WTC11 (cell line): ENCODE measurements at regions of chr13 and their contacts with region 1.

Region 1: DNA sequence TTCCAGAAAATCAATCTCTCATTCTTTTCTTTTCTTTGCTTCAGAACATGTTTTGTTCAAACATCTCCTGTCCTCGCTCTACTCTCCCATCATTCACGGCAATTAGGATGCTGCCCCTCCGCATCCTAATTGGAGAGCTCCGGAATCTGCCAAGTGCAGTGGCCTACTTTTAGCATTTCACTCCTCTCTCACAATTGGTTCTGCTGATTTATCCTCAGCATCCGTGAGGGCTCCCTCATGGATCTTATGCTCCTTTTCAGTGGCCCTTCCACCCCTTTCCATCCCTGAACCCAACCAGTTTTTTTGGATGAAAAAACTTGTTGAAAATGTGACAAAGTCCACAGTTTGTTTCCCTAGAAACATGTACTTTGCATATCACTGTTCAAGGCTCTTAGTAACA is 22.4 kb downstream of the AMER2 start:
- DNase-seq: no peak
- ATAC-seq: no peak
- H3K4me3 Mint-ChIP-seq: no peak overlapping the region
- H3K27ac Mint-ChIP-seq: no peak overlapping the region
- H3K4me1 Mint-ChIP-seq: peaks cover 45% of the 10 kb centered on the region
- H3K27me3 Mint-ChIP-seq: peaks cover 14% of the 10 kb centered on the region
- CTCF ChIP-seq: no peak

Region 2: DNA sequence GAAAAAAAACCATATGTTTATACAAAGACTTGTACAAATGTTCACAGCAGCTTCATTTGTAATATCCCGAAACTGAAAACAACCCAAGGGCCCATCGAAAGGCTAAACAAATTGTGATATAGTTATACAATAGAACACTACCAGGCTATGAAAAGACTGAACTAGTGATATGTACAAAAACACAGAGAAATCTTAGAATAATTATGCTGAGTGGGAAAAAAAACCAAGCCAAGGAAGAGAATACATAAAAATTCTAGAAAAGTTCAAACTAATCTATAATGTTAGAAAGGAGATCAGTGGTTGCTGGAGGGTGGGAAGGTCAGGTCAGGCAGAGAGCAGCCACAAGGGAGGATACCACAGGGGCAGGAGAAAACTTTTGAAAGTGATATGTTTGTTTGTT is 46.0 kb before region 1 on chr13:
- CTCF ChIA-PET with region 1: no interaction called
- POLR2A ChIA-PET with region 1: no interaction called
- DNase-seq: no peak
- ATAC-seq: no peak
- H3K4me3 Mint-ChIP-seq: no peak overlapping the region
- H3K27ac Mint-ChIP-seq: no peak overlapping the region
- H3K4me1 Mint-ChIP-seq: no peaks in the 10 kb centered on the region
- H3K27me3 Mint-ChIP-seq: no peaks in the 10 kb centered on the region
- CTCF ChIP-seq: no peak

Region 3: GRCh38 chr13:25114220-25114619 is 35.5 kb before region 1 on chr13:
- CTCF ChIA-PET with region 1: interaction called, 10 read pairs
- POLR2A ChIA-PET with region 1: no interaction called
- DNase-seq: peak; percentile 88
- ATAC-seq: peak; percentile 87
- H3K4me3 Mint-ChIP-seq: no peak overlapping the region
- H3K27ac Mint-ChIP-seq: no peak overlapping the region
- H3K4me1 Mint-ChIP-seq: peaks cover 50% of the 10 kb centered on the region
- H3K27me3 Mint-ChIP-seq: peaks cover 14% of the 10 kb centered on the region
- CTCF ChIP-seq: peak; percentile 73

Region 4: DNA sequence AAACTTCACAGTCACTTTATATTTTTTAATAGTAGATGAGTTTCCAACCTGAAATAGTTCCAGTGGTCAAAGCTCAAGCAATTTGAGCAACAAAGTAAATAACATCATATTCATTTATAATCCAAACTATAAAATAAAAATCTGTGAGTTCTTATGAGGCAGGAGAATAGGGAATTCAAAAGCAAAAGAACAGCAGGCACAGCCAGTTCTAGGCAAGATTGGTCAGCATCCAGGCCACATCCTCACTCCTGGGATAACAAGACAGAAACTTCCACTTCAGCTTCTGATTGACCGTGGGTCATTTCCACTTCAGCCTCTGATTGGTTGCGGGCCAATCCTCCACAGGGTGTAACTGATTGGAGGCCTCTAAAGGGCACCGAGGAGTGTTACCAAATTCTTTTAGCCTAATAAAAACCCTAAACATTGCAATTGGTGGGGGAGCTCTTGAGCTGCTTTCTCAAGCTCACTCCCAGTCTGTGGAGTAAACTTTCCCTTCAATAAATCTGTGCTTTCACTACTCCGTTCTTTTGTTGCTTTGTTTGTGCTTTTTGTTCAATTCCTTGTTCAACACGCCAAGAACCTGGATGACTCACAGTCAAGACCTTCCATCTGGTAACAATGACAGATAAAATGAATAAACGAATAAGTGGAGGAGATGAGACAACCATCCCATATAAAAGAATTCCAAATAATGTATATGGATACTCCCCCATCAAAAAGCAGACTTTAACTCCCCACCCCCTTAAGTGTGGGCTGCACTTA is 65.0 kb after region 1 on chr13:
- CTCF ChIA-PET with region 1: no interaction called
- POLR2A ChIA-PET with region 1: no interaction called
- DNase-seq: no peak
- ATAC-seq: peak; percentile 79
- H3K4me3 Mint-ChIP-seq: no peak overlapping the region
- H3K27ac Mint-ChIP-seq: no peak overlapping the region
- H3K4me1 Mint-ChIP-seq: peaks cover 18% of the 10 kb centered on the region
- H3K27me3 Mint-ChIP-seq: no peaks in the 10 kb centered on the region
- CTCF ChIP-seq: no peak

Region 5: DNA sequence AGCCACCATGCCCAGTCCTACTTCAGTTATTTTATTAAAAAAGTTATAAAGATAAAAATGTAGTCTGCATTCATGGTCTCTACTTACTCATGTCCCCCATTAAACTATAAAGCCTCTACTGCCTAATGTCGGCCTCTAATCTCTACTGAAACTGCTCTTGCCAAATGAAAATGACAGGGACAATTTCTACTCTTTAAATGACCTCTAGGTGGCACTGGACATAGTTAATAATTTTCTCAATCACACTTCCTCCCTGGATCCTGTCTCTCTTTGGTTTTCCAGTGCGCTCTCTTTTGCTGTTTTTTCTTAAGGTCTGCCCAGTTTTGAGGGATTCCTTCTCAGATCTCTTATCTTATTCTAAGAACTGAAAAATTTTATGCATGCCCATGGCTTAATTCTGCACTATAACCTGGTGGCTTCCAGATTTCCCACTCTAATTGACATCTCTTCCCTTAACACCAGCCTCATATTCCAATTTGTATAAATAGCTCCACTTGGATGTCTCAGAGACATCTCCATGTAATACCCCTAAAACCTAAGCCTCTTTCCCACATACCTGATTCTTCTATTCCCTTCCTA is 83.3 kb after region 1 on chr13:
- CTCF ChIA-PET with region 1: no interaction called
- POLR2A ChIA-PET with region 1: no interaction called
- DNase-seq: no peak
- ATAC-seq: 0 out of 2 replicates have a peak, but pooled peaks have one; percentile 30
- H3K4me3 Mint-ChIP-seq: no peak overlapping the region
- H3K27ac Mint-ChIP-seq: no peak overlapping the region
- H3K4me1 Mint-ChIP-seq: no peaks in the 10 kb centered on the region
- H3K27me3 Mint-ChIP-seq: no peaks in the 10 kb centered on the region
- CTCF ChIP-seq: peak; percentile 45